ENCODE measurements at regions of chr1 and their contacts with region 1.

Region 1: GRCh38 chr1:2247760-2248126 is 19.6 kb downstream of the SKI start:
- DNase-seq: no peak
- ATAC-seq: no peak
- H3K4me3 ChIP-seq: no peak overlapping the region
- H3K4me3 Mint-ChIP-seq: peak overlapping the region; percentile 82
- H3K27ac ChIP-seq: no peak overlapping the region
- H3K27ac Mint-ChIP-seq: no peak overlapping the region
- H3K4me1 ChIP-seq: peaks cover 92% of the 10 kb centered on the region
- H3K4me1 Mint-ChIP-seq: peaks cover 90% of the 10 kb centered on the region
- H3K27me3 ChIP-seq: no peaks in the 10 kb centered on the region
- H3K27me3 Mint-ChIP-seq: no peaks in the 10 kb centered on the region
- CTCF ChIP-seq: no peak

Region 2: DNA sequence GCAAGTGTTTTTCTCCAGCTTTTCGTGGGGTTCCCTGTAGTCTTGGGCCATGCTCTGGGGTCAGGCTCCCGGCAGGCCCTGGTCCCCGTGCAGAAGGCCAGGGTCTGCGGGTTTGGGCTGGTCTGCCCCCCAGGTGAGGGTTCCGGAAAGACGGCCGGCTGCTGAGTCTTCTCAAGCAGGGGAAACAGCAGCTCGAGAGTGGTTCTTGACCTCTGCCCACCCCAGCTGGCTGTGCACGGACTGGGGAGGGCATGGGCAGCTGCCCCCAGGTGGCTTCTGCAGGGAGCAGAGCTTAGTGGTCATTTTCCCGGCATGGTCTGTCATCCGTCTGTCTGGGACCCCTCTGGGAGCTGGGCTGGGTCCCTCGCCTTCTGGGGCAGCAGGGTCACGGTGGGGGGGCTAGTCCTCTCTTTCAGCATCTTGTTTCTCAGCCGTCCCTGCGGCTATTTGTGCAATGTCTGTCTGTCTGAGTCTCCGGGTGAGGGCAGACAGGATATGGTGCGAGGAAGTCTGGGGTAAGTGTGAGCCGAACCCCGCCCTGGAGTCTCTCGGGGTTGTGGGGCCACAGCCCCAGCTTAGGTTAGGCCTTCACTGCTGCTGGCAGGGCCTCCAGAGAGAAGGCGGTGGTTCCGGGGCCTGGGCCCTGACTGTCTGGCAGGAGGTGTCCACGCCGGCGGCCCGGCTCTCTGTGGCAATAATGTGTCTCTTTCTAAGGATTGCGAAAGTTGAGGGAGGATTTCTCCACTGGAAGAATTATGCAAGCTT is 13.6 kb before region 1 on chr1:
- CTCF ChIA-PET with region 1: interaction called, 3 read pairs
- POLR2A ChIA-PET with region 1: interaction called, 8 read pairs
- intact Hi-C with region 1: loop called in 1 of 2 experiments (anchors 2 kb)
- DNase-seq: peak; percentile 62 to 93 (median 80)
- ATAC-seq: peak; percentile 49
- H3K4me3 ChIP-seq: peak overlapping the region; percentile 95
- H3K4me3 Mint-ChIP-seq: peak overlapping the region; percentile 99
- H3K27ac ChIP-seq: peak overlapping the region; percentile 80 to 92
- H3K27ac Mint-ChIP-seq: peak overlapping the region; percentile 100
- H3K4me1 ChIP-seq: peaks cover 99% of the 10 kb centered on the region
- H3K4me1 Mint-ChIP-seq: peaks cover 71% of the 10 kb centered on the region
- H3K27me3 ChIP-seq: no peaks in the 10 kb centered on the region
- H3K27me3 Mint-ChIP-seq: peaks cover 20% of the 10 kb centered on the region
- CTCF ChIP-seq: no peak

Region 3: DNA sequence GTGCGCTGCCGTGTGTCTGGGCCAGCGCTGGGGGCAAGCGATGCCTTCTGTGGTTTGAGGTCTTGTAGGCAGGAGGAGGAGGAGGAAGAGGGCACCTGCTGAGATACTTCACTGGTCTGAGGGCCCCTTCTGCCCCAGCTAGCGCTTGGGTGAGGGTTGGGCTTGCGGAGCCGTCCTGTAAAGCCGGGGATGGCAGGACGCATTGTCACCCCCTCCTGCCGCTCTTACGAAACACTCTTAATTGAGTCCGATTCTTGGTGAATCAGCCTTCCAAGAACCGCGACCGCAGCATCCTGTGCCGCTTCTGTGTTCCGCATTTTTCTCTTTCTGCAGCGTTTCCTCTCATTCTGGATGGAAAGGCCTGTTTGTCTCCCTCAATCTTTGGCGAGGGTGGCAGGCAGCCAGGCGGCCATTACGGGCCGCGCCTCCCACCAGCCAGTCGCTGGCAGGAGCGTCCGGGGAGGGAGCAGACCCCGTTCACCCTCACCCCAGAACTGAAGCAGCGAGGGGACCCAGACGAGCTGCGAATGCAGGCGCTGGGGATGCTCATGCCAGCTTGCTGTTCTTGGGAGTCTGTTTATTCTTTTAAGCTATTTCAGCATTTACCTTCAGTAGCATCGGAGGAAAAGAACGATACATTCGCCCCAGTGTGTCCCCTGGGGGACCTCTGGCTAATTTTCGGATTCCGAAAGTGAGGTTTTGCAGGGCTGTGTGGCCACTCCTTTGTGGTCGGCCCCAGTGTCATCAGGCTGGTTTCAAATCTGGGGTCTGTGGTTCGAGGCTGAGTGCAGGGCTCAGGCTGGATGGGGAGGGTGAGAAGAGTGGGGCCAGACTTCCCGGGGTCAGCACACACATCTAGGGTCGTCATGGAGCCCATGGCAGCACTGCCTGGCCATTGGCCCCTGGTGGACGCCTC is 43.1 kb after region 1 on chr1:
- CTCF ChIA-PET with region 1: no interaction called
- POLR2A ChIA-PET with region 1: no interaction called
- intact Hi-C with region 1: no loop called
- DNase-seq: peak; percentile 52 to 91 (median 76)
- ATAC-seq: peak; percentile 64
- H3K4me3 ChIP-seq: peak overlapping the region; percentile 51
- H3K4me3 Mint-ChIP-seq: peak overlapping the region; percentile 93
- H3K27ac ChIP-seq: peak overlapping the region; percentile 60 to 66
- H3K27ac Mint-ChIP-seq: peak overlapping the region; percentile 99
- H3K4me1 ChIP-seq: peaks cover 97% of the 10 kb centered on the region
- H3K4me1 Mint-ChIP-seq: peaks cover 87% of the 10 kb centered on the region
- H3K27me3 ChIP-seq: no peaks in the 10 kb centered on the region
- H3K27me3 Mint-ChIP-seq: no peaks in the 10 kb centered on the region
- CTCF ChIP-seq: no peak